IMR-90 (cell line): ENCODE measurements at regions of chr11 and their contacts with region 1.

Region 1: DNA sequence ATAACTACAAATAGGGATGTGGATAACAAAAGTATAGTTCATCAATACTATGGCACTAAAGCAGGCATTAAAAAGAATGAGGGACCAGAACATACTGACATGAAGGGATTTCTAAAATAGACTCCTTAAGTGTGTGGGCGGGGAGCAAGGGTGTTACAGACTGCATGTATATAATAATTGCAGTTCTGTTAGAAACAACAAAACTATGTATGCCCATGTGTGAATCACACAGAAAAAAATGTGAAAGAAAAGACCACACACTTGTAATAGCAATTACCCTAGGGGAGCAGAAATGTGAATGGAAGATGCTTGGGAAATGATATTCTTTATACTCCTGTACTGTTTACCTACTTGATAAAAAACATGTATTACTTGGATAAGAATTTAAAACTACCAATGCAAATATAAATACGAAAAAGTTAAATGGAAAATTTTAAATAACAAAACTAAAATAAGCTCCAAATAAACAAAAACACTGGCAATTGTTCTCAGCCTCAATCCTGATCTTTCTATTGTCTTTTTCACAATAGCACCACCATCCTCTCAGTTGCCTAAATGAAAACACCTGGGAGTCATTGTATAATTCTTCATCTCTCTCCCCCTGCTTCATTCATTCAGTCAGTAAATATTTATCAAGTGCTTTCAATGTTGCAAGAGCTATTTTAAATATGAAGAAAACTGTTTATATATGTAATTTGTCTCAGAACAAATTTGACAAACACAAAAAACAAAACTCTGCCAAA is 129.8 kb downstream of the FCHSD2 start:
- DNase-seq: peak; percentile 59
- ATAC-seq: peak; percentile 73
- H3K4me3 ChIP-seq: no peak overlapping the region
- H3K27ac ChIP-seq: no peak overlapping the region
- H3K4me1 ChIP-seq: peaks cover 5% of the 10 kb centered on the region; the same call in 1 of the 2 replicates
- H3K27me3 ChIP-seq: no peaks in the 10 kb centered on the region
- CTCF ChIP-seq: no peak
- POLR2A ChIP-seq: no peak
- RAD21 ChIP-seq: no peak

Region 2: GRCh38 chr11:72930008-72930407 is 82.3 kb before region 1 on chr11:
- CTCF ChIA-PET with region 1: no interaction called
- POLR2A ChIA-PET with region 1: no interaction called
- dilution Hi-C with region 1: no loop called
- in situ Hi-C with region 1: no loop called
- intact Hi-C with region 1: loop called (anchors 10 kb)
- DNase-seq: peak; percentile 59
- ATAC-seq: peak; percentile 76
- H3K4me3 ChIP-seq: no peak overlapping the region
- H3K27ac ChIP-seq: no peak overlapping the region
- H3K4me1 ChIP-seq: peaks cover 3% of the 10 kb centered on the region
- H3K27me3 ChIP-seq: no peaks in the 10 kb centered on the region
- CTCF ChIP-seq: no peak
- POLR2A ChIP-seq: no peak
- RAD21 ChIP-seq: no peak

Region 3: DNA sequence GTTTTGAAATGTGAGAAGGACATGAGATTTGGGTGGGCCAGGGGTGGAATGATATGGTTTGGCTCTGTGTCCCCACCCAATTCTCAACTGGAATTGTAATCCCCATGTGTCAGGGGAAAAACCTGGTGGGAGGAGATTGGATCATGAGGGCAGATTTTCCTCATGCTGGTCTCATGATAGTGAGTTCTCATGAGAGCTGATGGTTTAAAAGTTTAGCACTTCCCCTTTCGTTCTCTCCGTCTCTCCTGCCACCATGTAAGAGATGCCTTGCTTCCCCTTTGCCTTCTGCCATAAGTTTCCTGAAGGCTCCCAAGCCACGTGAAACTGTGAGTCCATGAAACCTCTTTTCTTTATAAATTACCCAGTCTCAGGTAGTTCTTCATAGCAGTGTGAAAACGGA is 16.3 kb after region 1 on chr11:
- CTCF ChIA-PET with region 1: no interaction called
- POLR2A ChIA-PET with region 1: no interaction called
- dilution Hi-C with region 1: no loop called
- in situ Hi-C with region 1: no loop called
- intact Hi-C with region 1: no loop called
- DNase-seq: no peak
- ATAC-seq: no peak
- H3K4me3 ChIP-seq: no peak overlapping the region
- H3K27ac ChIP-seq: no peak overlapping the region
- H3K4me1 ChIP-seq: no peaks in the 10 kb centered on the region
- H3K27me3 ChIP-seq: no peaks in the 10 kb centered on the region
- CTCF ChIP-seq: no peak
- POLR2A ChIP-seq: no peak
- RAD21 ChIP-seq: no peak

Region 4: GRCh38 chr11:73085189-73085875 is 73.0 kb after region 1 on chr11:
- CTCF ChIA-PET with region 1: no interaction called
- POLR2A ChIA-PET with region 1: no interaction called
- dilution Hi-C with region 1: no loop called
- in situ Hi-C with region 1: no loop called
- intact Hi-C with region 1: no loop called
- DNase-seq: peak; percentile 63
- ATAC-seq: peak; percentile 61
- H3K4me3 ChIP-seq: no peak overlapping the region
- H3K27ac ChIP-seq: no peak overlapping the region
- H3K4me1 ChIP-seq: peaks cover 6% of the 10 kb centered on the region
- H3K27me3 ChIP-seq: no peaks in the 10 kb centered on the region
- CTCF ChIP-seq: no peak
- POLR2A ChIP-seq: no peak
- RAD21 ChIP-seq: no peak

Region 5: GRCh38 chr11:73478738-73479347 is 466.6 kb after region 1 on chr11:
- CTCF ChIA-PET with region 1: no interaction called
- POLR2A ChIA-PET with region 1: no interaction called
- dilution Hi-C with region 1: no loop called
- in situ Hi-C with region 1: no loop called
- intact Hi-C with region 1: no loop called
- DNase-seq: peak; percentile 42
- ATAC-seq: peak; percentile 89
- H3K4me3 ChIP-seq: no peak overlapping the region
- H3K27ac ChIP-seq: no peak overlapping the region
- H3K4me1 ChIP-seq: peaks cover 3% of the 10 kb centered on the region
- H3K27me3 ChIP-seq: no peaks in the 10 kb centered on the region
- CTCF ChIP-seq: peak; percentile 74
- POLR2A ChIP-seq: no peak
- RAD21 ChIP-seq: peak; percentile 68